Psoas muscle (tissue), 8 donors: ENCODE measurements at regions of chr1 and their contacts with region 1.

Region 1: GRCh38 chr1:202315576-202316168 is 26.1 kb downstream of the UBE2T start:
- DNase-seq: peak; percentile 68 to 83
- ATAC-seq: peak; percentile 89 to 96 (median 92)
- H3K4me3 ChIP-seq: no peak overlapping the region
- H3K27ac ChIP-seq: no peak overlapping the region
- H3K4me1 ChIP-seq: no peaks in the 10 kb centered on the region
- H3K27me3 ChIP-seq: no peaks in the 10 kb centered on the region
- CTCF ChIP-seq: peak; percentile 86

Region 2: DNA sequence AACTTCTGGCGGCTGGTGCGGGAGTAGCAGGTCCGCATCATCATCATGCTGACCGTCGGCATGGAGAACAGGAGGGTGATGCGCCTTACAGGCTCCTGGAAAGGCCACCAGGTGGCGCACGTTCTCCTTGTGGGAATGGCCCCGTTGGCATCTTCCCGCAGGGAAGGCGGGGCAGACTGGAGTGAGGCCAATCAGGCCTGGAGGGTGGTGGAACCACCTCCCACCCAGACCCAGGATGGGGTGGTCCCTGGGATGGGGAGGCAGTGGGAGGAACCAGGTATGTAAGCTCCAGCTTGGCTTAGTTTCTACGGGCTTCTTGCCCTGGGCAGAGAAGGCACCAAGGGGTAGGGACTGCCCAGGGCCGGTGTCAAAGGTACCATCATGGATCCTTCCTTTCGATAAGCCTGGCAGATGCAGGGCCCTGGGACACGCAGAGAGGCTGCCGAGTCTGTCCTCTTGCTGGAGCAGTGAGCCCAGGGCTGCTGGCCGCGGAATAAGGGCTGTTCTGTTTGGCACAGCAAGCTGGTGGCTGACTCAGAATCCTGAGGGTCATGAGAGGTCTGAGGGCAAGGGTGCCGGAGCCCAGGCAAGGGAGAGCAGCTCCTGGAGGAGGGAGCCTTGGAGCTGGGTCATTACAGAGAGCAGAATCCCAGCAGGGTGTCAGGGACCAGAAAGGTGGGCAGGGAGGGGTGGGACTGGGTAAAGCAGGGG is 130.8 kb before region 1 on chr1:
- intact Hi-C with region 1: loop called (anchors 1 to 2 kb)
- DNase-seq: peak; percentile 81 to 89
- ATAC-seq: peak; percentile 68 to 88 (median 80)
- H3K4me3 ChIP-seq: no peak overlapping the region
- H3K27ac ChIP-seq: no peak overlapping the region
- H3K4me1 ChIP-seq: no peaks in the 10 kb centered on the region
- H3K27me3 ChIP-seq: no peaks in the 10 kb centered on the region
- CTCF ChIP-seq: peak; percentile 77

Region 3: DNA sequence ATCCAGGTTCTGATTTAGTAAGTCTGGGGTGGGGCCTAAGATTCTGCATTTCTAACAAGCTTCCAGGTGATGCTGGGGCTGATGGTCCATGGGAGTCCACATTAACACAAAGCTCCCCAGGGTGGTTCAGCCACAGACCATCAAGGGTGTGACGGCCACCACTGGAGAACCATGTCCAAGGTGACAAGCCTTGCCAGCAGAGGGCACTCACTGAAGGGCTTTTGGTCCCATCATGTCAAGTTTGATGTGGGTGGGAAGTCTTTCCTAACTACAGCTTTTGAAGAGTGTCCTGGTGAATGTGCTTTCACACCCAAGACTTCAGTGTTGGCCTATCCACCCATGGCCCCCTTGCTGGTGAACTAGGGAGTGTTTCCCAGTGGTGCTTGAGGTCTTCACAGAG is 41.1 kb before region 1 on chr1:
- intact Hi-C with region 1: loop called (anchors 2 to 5 kb)
- DNase-seq: no peak
- ATAC-seq: peak; percentile 44 to 63 (median 54)
- H3K4me3 ChIP-seq: no peak overlapping the region
- H3K27ac ChIP-seq: no peak overlapping the region
- H3K4me1 ChIP-seq: no peaks in the 10 kb centered on the region
- H3K27me3 ChIP-seq: no peaks in the 10 kb centered on the region
- CTCF ChIP-seq: peak; percentile 45